PC-9 (cell line): ENCODE measurements at regions of chr6 and their contacts with region 1.

Region 1: GRCh38 chr6:38443352-38444146 is 196.2 kb downstream of the BTBD9 start:
- DNase-seq: no peak
- H3K4me3 ChIP-seq: no peak overlapping the region
- H3K27ac ChIP-seq: no peak overlapping the region
- H3K4me1 ChIP-seq: 0 out of 2 replicates have a peak, but pooled peaks cover 6% of the 10 kb centered on the region
- H3K27me3 ChIP-seq: no peaks in the 10 kb centered on the region
- CTCF ChIP-seq: no peak

Region 2: GRCh38 chr6:38068854-38069590 is 374.5 kb before region 1 on chr6:
- CTCF ChIA-PET with region 1: interaction called, 21 read pairs
- POLR2A ChIA-PET with region 1: no interaction called
- intact Hi-C with region 1: no loop called
- DNase-seq: no peak
- H3K4me3 ChIP-seq: no peak overlapping the region
- H3K27ac ChIP-seq: no peak overlapping the region
- H3K4me1 ChIP-seq: no peaks in the 10 kb centered on the region
- H3K27me3 ChIP-seq: no peaks in the 10 kb centered on the region
- CTCF ChIP-seq: no peak